ENCODE measurements at regions of chr5 and their contacts with region 1.

Region 1: DNA sequence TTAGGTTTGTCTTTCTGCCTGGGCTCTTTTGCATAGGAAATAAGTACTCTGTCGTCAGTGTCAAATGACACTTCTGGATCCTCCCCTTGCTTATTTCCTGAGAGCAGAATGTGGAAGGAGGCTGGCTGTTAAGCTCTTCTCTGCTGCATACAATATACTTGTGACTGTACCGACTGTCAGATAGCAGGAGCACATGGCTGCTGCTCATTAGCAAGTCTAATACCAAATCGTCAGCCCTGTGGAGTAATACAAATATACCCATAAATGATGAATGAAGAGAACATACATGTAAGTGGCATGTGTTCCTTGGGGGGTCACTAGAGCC is at the start of gene GPR151:
- DNase-seq: no peak
- H3K4me3 ChIP-seq: no peak within 1 kb of the TSS
- H3K27ac ChIP-seq: no peak within 1 kb of the TSS
- H3K4me1 ChIP-seq: no peaks in the 10 kb centered on the region
- H3K27me3 ChIP-seq: no peaks in the 10 kb centered on the region
- CTCF ChIP-seq: no peak
- POLR2A ChIP-seq: no peak
- total RNA-seq, gene GPR151: not detected

Region 2: GRCh38 chr5:145062280-145063062 is 1453.6 kb before region 1 on chr5:
- intact Hi-C with region 1: loop called (anchors 10 kb)
- DNase-seq: no peak
- H3K4me3 ChIP-seq: no peak overlapping the region
- H3K27ac ChIP-seq: no peak overlapping the region
- H3K4me1 ChIP-seq: no peaks in the 10 kb centered on the region
- H3K27me3 ChIP-seq: no peaks in the 10 kb centered on the region
- CTCF ChIP-seq: no peak
- POLR2A ChIP-seq: no peak

Measured in breast epithelium (tissue), 4 donors.